ENCODE measurements at regions of chr13 and their contacts with region 1.

Region 1: GRCh38 chr13:87671031-87671752 is at the start of gene SLITRK5:
- DNase-seq: peak; percentile 74
- ATAC-seq: peak; percentile 79
- H3K4me3 ChIP-seq: peak within 1 kb of the TSS; percentile 75
- H3K27ac ChIP-seq: no peak within 1 kb of the TSS; the same call in 1 of the 2 replicates
- H3K4me1 ChIP-seq: peaks cover 4% of the 10 kb centered on the region
- H3K27me3 ChIP-seq: peaks cover 5% of the 10 kb centered on the region; the same call in 1 of the 2 replicates
- CTCF ChIP-seq: peak; percentile 74
- total RNA-seq, gene SLITRK5: 0.17 and 0.18 TPM in 2 replicates

Region 2: DNA sequence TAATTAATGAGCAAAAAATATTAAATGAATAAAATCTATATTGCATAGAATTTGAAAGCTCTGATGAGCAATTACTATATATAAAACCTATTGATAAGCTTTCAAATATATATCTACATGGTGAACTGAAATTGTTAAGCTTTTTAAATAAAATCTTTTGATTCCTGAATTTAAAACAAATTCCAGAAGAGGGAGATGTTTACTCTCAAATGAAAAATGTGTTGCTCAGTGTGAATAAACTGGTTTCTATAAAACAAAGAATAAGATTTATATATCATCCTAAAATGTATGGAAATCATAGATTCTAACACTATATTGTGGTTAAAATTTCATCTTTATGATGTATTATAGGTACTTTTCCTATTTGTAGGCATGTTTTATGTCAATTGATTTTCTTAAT is 1700.5 kb before region 1 on chr13:
- CTCF ChIA-PET with region 1: no interaction called
- POLR2A ChIA-PET with region 1: no interaction called
- intact Hi-C with region 1: loop called (anchors 5 kb)
- DNase-seq: peak; percentile 36
- ATAC-seq: no peak
- H3K4me3 ChIP-seq: no peak overlapping the region
- H3K27ac ChIP-seq: no peak overlapping the region
- H3K4me1 ChIP-seq: peaks cover 12% of the 10 kb centered on the region
- H3K27me3 ChIP-seq: no peaks in the 10 kb centered on the region
- CTCF ChIP-seq: peak; percentile 46

Region 3: DNA sequence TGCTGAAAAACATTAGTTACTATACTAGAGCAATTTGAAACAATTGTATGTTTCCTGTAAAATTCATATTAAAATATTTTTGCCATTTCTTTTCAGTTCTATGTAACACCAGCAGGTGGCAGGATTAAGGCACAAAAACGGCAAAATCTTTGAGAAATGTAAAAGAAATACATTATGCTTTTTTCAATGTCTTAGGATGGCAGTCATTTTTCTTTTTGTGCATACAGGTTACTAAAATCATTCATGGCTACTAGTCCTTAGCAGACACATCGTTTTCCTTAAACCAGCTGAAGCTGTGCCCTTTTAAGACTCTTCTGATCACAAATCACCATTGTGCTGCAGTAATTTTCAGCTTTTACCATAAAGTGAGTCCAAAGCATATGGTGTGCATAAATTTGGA is 800.7 kb before region 1 on chr13:
- CTCF ChIA-PET with region 1: no interaction called
- POLR2A ChIA-PET with region 1: no interaction called
- intact Hi-C with region 1: loop called (anchors 5 kb)
- DNase-seq: peak; percentile 38
- ATAC-seq: no peak
- H3K4me3 ChIP-seq: no peak overlapping the region
- H3K27ac ChIP-seq: no peak overlapping the region
- H3K4me1 ChIP-seq: no peaks in the 10 kb centered on the region
- H3K27me3 ChIP-seq: no peaks in the 10 kb centered on the region
- CTCF ChIP-seq: peak; percentile 67

Region 4: GRCh38 chr13:87280139-87280538 is 391.1 kb before region 1 on chr13:
- CTCF ChIA-PET with region 1: no interaction called
- POLR2A ChIA-PET with region 1: no interaction called
- intact Hi-C with region 1: loop called (anchors 5 kb)
- DNase-seq: peak; percentile 2
- ATAC-seq: no peak
- H3K4me3 ChIP-seq: no peak overlapping the region
- H3K27ac ChIP-seq: no peak overlapping the region
- H3K4me1 ChIP-seq: no peaks in the 10 kb centered on the region
- H3K27me3 ChIP-seq: no peaks in the 10 kb centered on the region
- CTCF ChIP-seq: peak; percentile 55

Region 5: GRCh38 chr13:87356314-87356713 is 314.9 kb before region 1 on chr13:
- CTCF ChIA-PET with region 1: no interaction called
- POLR2A ChIA-PET with region 1: no interaction called
- intact Hi-C with region 1: no loop called
- DNase-seq: no peak
- ATAC-seq: no peak
- H3K4me3 ChIP-seq: no peak overlapping the region
- H3K27ac ChIP-seq: no peak overlapping the region
- H3K4me1 ChIP-seq: no peaks in the 10 kb centered on the region
- H3K27me3 ChIP-seq: no peaks in the 10 kb centered on the region
- CTCF ChIP-seq: no peak

Region 6: DNA sequence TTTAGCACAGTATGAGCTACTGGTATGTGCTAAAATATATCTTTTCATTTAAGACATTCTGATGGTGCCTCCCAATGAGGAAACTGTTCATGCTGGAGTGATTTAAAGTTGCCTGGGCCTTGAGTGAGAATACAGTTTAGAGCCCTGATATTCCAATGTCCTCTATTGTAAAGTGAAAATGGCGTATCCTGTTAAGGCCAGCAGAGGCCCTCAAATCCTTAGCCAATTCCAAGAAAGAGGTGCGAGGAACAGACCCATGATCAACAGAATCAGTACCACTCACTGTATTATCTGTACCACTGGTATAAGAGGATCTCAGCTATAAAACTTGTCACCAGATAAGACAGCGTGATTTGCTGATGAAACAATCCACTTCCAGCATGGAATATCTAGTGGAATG is 273.1 kb before region 1 on chr13:
- CTCF ChIA-PET with region 1: no interaction called
- POLR2A ChIA-PET with region 1: no interaction called
- intact Hi-C with region 1: loop called (anchors 2 kb)
- DNase-seq: no peak
- ATAC-seq: no peak
- H3K4me3 ChIP-seq: no peak overlapping the region
- H3K27ac ChIP-seq: no peak overlapping the region
- H3K4me1 ChIP-seq: no peaks in the 10 kb centered on the region
- H3K27me3 ChIP-seq: no peaks in the 10 kb centered on the region
- CTCF ChIP-seq: no peak

Region 7: GRCh38 chr13:87777395-87777794 is 106.2 kb after region 1 on chr13:
- CTCF ChIA-PET with region 1: no interaction called
- POLR2A ChIA-PET with region 1: no interaction called
- intact Hi-C with region 1: loop called (anchors 5 kb)
- DNase-seq: peak; percentile 11
- ATAC-seq: no peak; the same call in 1 of the 2 replicates
- H3K4me3 ChIP-seq: no peak overlapping the region
- H3K27ac ChIP-seq: no peak overlapping the region
- H3K4me1 ChIP-seq: no peaks in the 10 kb centered on the region
- H3K27me3 ChIP-seq: no peaks in the 10 kb centered on the region
- CTCF ChIP-seq: peak; percentile 17; the same call in 1 of the 2 replicates

Region 8: DNA sequence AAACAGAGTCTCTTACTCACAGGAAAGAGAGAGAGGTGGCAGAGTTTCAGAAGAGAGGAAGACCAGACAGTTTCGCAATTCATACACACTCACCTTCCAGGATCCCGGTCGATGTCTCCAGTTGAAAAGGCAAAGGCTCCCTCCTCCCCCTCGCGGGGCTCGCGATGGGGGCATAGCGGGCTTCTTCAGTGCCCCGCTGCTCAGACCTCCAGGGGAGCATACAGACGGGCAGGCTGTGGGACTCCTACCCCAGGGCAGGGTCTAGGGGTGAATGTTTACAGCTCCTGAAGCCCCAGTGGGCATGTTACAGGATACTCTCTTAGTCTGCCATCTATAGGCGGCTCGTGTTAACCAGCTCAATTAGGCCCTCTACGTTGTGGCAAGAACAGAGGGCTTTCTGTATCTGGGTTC is 139.2 kb after region 1 on chr13:
- CTCF ChIA-PET with region 1: no interaction called
- POLR2A ChIA-PET with region 1: no interaction called
- intact Hi-C with region 1: loop called (anchors 2 kb)
- DNase-seq: peak; percentile 62
- ATAC-seq: peak; percentile 82
- H3K4me3 ChIP-seq: peak overlapping the region; percentile 72
- H3K27ac ChIP-seq: peak overlapping the region; percentile 50
- H3K4me1 ChIP-seq: no peaks in the 10 kb centered on the region
- H3K27me3 ChIP-seq: no peaks in the 10 kb centered on the region
- CTCF ChIP-seq: peak; percentile 53

Measured in PC-3 (cell line).